CD8-positive, alpha-beta T cell (primary cell): ENCODE measurements at regions of chr5 and their contacts with region 1.

Region 1: GRCh38 chr5:50684721-50685120 is 18.3 kb downstream of the PARP8 start:
- DNase-seq: no peak
- ATAC-seq: no peak
- H3K4me3 ChIP-seq: no peak overlapping the region
- H3K4me3 Mint-ChIP-seq: peak overlapping the region; percentile 8
- H3K27ac ChIP-seq: no peak overlapping the region
- H3K27ac Mint-ChIP-seq: peak overlapping the region; percentile 62
- H3K4me1 ChIP-seq: peaks cover 35% of the 10 kb centered on the region
- H3K4me1 Mint-ChIP-seq: peaks cover 81% of the 10 kb centered on the region
- H3K27me3 ChIP-seq: no peaks in the 10 kb centered on the region
- H3K27me3 Mint-ChIP-seq: no peaks in the 10 kb centered on the region
- CTCF ChIP-seq: no peak

Region 2: DNA sequence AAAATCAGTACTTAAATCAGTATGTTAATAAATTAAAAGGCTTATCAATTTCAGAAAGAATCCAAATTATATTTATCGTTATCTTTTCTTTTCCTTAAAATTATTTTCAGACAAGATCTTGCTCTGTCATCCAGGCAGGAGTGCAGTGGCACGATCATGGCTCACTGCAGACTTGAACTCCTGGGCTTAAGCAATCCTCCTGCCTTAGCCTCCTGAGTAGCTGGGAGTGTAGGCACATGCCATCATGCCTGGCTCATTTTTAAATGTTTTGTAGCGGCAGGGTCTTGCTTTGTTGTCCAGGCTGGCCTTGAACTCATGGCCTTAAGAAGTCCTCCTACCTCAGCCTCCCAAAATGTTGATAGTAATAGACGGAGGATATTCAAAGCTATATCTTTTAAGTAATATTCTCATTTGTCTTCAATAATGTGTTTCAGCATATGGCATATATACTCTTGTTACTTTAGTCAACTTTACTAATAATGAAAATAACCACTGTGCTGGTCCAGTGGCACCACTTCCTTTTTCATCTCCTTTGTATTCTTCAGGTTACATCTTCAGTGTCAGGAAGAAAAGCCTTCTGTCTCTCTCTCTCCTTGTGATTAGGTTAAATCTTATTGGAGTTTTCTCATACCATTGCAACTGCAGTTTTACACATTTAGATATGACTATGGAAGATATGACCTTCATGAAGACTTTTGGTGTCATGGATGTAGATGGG is 12.9 kb after region 1 on chr5:
- CTCF ChIA-PET with region 1: no interaction called
- POLR2A ChIA-PET with region 1: no interaction called
- intact Hi-C with region 1: loop called in 1 of 2 experiments (anchors 2 kb)
- DNase-seq: no peak
- ATAC-seq: no peak
- H3K4me3 ChIP-seq: no peak overlapping the region
- H3K4me3 Mint-ChIP-seq: no peak overlapping the region
- H3K27ac ChIP-seq: no peak overlapping the region
- H3K27ac Mint-ChIP-seq: peak overlapping the region; percentile 29
- H3K4me1 ChIP-seq: peaks cover 25% of the 10 kb centered on the region
- H3K4me1 Mint-ChIP-seq: peaks cover 72% of the 10 kb centered on the region
- H3K27me3 ChIP-seq: no peaks in the 10 kb centered on the region
- H3K27me3 Mint-ChIP-seq: no peaks in the 10 kb centered on the region
- CTCF ChIP-seq: no peak

Region 3: DNA sequence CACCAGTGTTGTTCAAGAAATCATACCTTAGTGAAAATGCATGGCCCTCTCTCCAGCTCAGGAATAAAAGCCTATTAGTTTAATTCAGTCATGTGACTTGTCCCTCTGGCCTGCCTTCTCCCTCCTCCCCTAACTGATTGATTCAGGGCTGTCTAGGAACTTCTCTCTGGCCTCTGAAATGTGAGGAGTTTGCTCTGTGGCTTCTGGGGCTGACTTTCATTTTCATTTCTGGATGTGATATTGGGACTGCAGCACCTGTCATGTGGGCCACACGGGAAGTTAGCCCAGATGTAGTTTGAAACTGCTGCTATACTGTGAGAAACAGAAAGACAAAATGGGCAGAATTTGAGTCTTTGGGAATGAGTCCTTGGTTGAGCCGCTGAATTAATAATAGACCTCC is 26.6 kb after region 1 on chr5:
- CTCF ChIA-PET with region 1: no interaction called
- POLR2A ChIA-PET with region 1: no interaction called
- intact Hi-C with region 1: no loop called
- DNase-seq: peak; percentile 17 to 91 (median 57)
- ATAC-seq: peak; percentile 90
- H3K4me3 ChIP-seq: peak overlapping the region; percentile 25 to 37
- H3K4me3 Mint-ChIP-seq: peak overlapping the region; percentile 85
- H3K27ac ChIP-seq: peak overlapping the region; percentile 49 to 77
- H3K27ac Mint-ChIP-seq: peak overlapping the region; percentile 90
- H3K4me1 ChIP-seq: peaks cover 80% of the 10 kb centered on the region
- H3K4me1 Mint-ChIP-seq: peaks cover 81% of the 10 kb centered on the region
- H3K27me3 ChIP-seq: no peaks in the 10 kb centered on the region
- H3K27me3 Mint-ChIP-seq: no peaks in the 10 kb centered on the region
- CTCF ChIP-seq: no peak

Region 4: DNA sequence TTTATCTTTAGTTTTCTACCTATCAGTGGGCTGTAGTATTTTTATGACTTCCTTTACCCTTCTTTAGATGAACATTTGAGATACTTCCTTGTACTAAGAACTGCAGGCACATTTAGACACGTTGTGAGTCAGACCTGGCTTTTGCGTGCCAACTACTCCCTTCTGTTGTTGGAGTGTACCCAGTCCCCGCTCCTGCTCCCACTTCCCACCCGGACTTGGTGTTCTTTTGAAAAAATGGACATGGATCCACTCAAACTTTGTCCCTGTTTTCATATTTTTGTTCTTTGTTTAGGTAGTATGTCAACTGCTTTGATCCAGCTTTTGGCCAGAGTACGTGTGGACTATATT is 42.4 kb after region 1 on chr5:
- CTCF ChIA-PET with region 1: no interaction called
- POLR2A ChIA-PET with region 1: no interaction called
- intact Hi-C with region 1: no loop called
- DNase-seq: peak in 3 of 9 experiments; percentile 20 to 45 (median 37)
- ATAC-seq: peak; percentile 75
- H3K4me3 ChIP-seq: no peak overlapping the region
- H3K4me3 Mint-ChIP-seq: peak overlapping the region; percentile 49
- H3K27ac ChIP-seq: peak overlapping the region in 1 of 2 experiments; percentile 47
- H3K27ac Mint-ChIP-seq: peak overlapping the region; percentile 87
- H3K4me1 ChIP-seq: peaks cover 40% of the 10 kb centered on the region
- H3K4me1 Mint-ChIP-seq: peaks cover 81% of the 10 kb centered on the region
- H3K27me3 ChIP-seq: no peaks in the 10 kb centered on the region
- H3K27me3 Mint-ChIP-seq: no peaks in the 10 kb centered on the region
- CTCF ChIP-seq: no peak